Activated B cell treated with CpG ODN at 0.5 μM for 24 hours (primary cell): ENCODE measurements at regions of chr19 and their contacts with region 1.

Region 1: GRCh38 chr19:35592226-35592625 is 6.3 kb downstream of the PMIS2 start:
- DNase-seq: no peak
- ATAC-seq: peak; percentile 54
- H3K4me3 Mint-ChIP-seq: no peak overlapping the region
- H3K27ac Mint-ChIP-seq: no peak overlapping the region
- H3K4me1 Mint-ChIP-seq: no peaks in the 10 kb centered on the region
- H3K27me3 Mint-ChIP-seq: no peaks in the 10 kb centered on the region
- CTCF ChIP-seq: no peak

Region 2: DNA sequence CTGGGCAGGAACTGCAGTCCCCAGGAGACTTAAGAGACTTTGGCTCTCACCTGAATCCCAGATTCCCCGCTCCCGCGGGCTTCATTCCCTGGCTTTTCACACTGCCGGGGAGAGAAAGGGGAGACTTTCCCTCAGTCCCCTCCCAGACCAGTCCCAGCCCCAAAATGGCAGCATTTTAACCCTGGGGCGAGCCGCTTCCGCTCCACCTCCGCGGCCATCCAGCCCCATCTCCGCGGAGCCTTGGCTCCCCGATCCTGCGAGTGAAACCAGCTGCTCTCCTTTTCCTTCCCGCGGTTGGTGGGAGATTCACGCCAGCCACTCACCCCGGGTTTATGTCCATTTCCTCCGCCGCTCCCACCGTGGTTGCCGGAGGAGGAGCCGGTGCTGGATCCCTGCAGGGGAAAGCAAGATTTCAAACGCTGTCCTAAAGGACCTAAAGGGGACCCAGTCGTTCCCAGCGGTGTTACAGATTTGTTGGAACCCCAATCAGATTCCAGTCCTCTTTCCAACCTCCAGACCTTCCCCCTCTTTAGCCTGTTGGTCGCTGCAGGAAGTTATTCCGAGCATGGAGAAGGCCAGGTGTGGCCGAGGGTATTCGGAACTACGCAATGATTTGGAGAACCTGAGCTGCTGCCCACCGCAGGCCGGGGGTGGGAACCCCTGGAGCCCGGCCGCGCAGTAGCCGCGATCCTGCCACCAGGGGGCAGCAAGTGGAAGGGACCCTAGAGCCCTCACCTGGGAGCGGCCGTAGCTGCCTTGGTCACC is 82.2 kb before region 1 on chr19:
- CTCF ChIA-PET with region 1: interaction called, 22 read pairs
- POLR2A ChIA-PET with region 1: no interaction called
- intact Hi-C with region 1: loop called (anchors 1 kb)
- DNase-seq: peak; percentile 76
- ATAC-seq: peak; percentile 91
- H3K4me3 Mint-ChIP-seq: peak overlapping the region; percentile 73
- H3K27ac Mint-ChIP-seq: no peak overlapping the region
- H3K4me1 Mint-ChIP-seq: peaks cover 17% of the 10 kb centered on the region
- H3K27me3 Mint-ChIP-seq: peaks cover 53% of the 10 kb centered on the region
- CTCF ChIP-seq: peak; percentile 86

Region 3: GRCh38 chr19:35569281-35569781 is 22.9 kb before region 1 on chr19:
- CTCF ChIA-PET with region 1: no interaction called
- POLR2A ChIA-PET with region 1: no interaction called
- intact Hi-C with region 1: no loop called
- DNase-seq: no peak
- ATAC-seq: no peak
- H3K4me3 Mint-ChIP-seq: no peak overlapping the region
- H3K27ac Mint-ChIP-seq: no peak overlapping the region
- H3K4me1 Mint-ChIP-seq: no peaks in the 10 kb centered on the region
- H3K27me3 Mint-ChIP-seq: peaks cover 31% of the 10 kb centered on the region
- CTCF ChIP-seq: no peak